Caco-2 (cell line): ENCODE measurements at regions of chr10 and their contacts with region 1.

Region 1: DNA sequence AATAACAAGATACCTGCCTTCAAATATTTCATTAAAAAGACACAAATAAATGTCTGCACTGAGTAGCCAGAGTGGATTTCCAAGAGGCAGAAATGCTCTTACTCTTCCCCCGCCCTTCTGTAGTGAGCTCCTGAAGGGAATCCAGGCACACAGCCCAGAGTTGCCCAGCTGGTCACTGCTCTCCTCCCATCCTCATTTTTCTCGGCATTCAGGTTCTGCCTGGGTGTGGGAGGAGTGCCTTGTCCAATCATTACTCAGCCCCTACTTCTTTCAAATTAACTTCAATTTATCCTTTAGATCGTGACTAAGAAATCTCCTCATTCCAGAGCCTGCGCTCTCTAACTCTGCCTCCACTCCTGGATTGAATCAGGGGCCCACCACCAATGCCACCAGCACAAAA is 12.2 kb downstream of the CCDC6 start:
- DNase-seq: no peak
- H3K4me3 ChIP-seq: no peak overlapping the region
- H3K4me3 Mint-ChIP-seq: no peak overlapping the region
- H3K27ac Mint-ChIP-seq: no peak overlapping the region
- H3K4me1 ChIP-seq: peaks cover 33% of the 10 kb centered on the region
- H3K4me1 Mint-ChIP-seq: peaks cover 52% of the 10 kb centered on the region
- H3K27me3 ChIP-seq: no peaks in the 10 kb centered on the region
- H3K27me3 Mint-ChIP-seq: no peaks in the 10 kb centered on the region
- CTCF ChIP-seq: no peak

Region 2: DNA sequence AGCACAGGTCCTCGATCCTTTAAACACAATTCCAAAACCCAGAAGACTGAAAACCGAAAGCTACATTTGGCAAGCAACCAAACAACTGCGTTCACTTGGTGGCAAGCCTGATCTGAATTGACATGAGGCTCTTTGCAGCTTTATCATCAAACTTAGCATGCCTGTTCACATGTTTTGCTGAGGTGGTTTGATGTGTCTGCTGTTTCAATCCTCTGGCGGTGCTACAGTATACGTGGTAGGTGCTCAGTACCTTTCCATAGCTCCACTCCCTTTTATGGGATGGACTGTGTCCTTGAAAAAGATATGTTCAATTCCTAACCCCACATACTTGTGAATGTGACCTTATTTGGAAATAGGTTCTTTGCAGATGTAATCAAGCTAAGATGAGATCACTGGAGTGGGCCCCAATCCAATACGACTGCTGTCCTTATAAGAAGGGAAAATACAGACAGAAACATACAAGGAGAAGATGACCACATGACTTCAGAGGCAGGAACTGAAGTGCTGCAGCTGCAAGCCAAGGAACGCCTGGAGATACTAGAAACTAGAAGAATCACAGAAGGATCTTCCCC is 21.1 kb before region 1 on chr10:
- CTCF ChIA-PET with region 1: no interaction called
- POLR2A ChIA-PET with region 1: no interaction called
- intact Hi-C with region 1: loop called (anchors 2 kb)
- DNase-seq: no peak
- H3K4me3 ChIP-seq: no peak overlapping the region
- H3K4me3 Mint-ChIP-seq: no peak overlapping the region
- H3K27ac Mint-ChIP-seq: no peak overlapping the region
- H3K4me1 ChIP-seq: peaks cover 38% of the 10 kb centered on the region
- H3K4me1 Mint-ChIP-seq: peaks cover 37% of the 10 kb centered on the region
- H3K27me3 ChIP-seq: no peaks in the 10 kb centered on the region
- H3K27me3 Mint-ChIP-seq: no peaks in the 10 kb centered on the region
- CTCF ChIP-seq: no peak